ENCODE measurements at regions of chr6 and their contacts with region 1.

Region 1: DNA sequence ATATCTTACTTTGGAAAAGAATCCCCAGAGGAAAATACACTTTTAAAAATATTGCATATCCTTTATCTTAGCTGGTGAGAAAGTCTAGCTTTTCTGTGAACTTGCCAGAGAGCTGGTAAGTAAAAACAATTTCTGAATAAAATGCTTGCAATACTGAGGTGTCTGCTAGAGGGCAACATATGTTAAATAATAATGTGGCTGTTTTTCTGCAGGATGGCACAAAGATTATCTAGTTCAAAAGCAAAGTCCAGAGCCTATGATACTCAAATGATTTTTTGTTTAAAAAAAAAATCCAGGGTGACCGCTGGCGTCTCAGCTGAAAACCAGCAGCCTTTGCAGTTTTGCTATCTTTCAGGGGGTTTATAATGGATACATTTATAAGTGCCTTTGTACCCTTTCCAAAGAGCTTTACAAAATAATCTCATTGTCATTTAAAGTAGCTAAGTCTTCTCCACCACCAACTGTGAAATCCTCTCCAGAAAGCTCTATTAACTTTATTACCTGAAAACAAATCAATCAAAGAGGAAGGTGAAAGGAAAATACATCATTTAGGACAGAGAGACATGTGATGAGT is 194.9 kb downstream of the PHACTR1 start:
- DNase-seq: no peak
- ATAC-seq: peak; percentile 52

Region 2: DNA sequence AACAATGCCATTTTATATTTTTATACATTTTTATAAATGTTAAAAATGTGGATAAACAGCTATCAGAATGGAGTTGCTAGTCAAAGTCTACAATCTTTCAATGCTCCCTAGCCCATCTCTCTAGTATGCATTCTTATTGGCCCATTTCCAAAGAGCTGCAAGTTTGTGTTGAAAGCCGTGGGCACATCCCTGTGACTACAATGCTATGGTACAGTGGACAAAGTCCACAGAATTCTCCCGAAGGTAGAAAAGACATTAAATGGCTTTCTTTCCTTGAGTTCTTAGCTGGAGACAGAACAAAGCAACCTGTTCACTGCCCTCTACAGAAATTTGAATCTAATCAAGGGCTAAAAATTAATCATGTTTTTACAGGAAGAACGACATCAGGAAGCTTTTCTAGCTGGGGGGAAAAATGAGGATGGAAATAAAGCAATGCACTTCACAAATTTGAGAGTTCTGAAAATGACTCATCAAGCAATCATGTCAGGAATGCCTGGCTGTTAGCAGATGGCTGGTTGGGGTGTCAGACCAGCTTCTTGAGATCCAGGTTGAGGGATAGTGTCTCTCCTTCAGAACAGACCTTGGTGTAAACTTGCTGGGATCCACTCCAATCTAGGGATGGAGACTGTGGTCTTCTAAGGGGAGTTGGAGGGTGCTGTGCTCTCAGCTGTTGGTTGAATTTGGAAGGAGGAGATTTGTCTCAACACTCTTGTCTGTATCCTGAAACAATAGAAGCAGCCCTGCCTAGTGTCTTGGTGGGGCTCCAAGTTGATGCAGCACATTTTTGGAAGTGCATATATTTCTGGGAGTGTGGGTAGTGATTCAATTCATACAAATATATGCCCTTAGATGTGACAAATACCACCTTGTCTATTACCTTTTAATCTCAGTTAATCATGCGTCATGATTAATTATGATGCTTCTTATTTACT is 338.3 kb before region 1 on chr6:
- intact Hi-C with region 1: no loop called
- DNase-seq: no peak
- ATAC-seq: no peak

Region 3: GRCh38 chr6:13328076-13328874 is 416.8 kb after region 1 on chr6 and contains the start of gene TBC1D7:
- intact Hi-C with region 1: loop called (anchors 10 kb)
- DNase-seq: peak; percentile 94
- ATAC-seq: peak; percentile 95
- total RNA-seq, gene TBC1D7: 36.0 TPM

Measured in Right ventricle myocardium superior (tissue), 1 donor.